ENCODE measurements at regions of chr12 and their contacts with region 1.

Region 1: DNA sequence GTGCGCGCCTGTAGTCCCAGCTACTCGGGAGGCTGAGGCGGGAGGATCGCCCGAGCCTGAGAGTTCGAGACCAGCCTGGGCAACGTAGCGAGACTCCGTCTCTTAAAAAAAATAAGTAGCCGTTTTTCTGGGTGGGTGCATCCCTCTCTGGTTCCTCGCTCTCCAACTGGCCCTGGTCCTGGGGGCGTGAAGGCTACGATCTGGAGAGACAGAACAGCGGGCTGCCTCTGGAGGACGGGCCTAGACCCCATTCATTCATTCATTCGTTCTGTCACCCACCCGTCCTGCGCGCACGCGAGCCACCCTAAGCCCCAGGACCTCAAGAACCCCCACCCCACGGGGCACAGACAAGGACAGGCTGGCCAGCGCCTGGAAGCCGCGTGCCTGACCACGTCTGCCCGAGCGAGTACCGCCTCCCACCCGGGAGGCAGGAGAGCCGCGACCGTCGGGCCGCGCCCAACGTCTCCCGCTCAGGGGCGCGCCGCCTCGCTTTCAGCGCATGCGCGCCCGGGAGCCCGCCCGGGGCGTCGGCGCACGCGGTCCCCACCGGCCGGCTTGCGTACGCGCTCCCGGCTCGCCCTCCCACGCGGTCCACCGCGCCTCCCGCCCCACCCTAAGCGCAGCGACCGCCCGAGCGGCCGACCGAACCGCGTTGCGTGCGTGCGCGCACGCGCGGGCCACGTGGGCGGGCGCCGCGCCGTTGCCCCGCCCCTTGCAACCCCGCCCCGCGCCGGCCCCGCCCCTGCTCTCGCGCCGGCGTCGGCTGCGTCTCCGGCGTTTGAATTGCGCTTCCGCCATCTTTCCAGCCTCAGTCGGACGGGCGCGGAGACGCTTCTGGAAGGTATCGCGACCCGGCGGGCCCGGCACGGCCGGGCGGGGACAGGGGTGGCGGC is at the start of gene RAN:
- DNase-seq: peak; percentile 97
- H3K4me3 ChIP-seq: peak within 1 kb of the TSS; percentile 100
- H3K27ac ChIP-seq: peak within 1 kb of the TSS; percentile 96
- H3K4me1 ChIP-seq: peaks cover 39% of the 10 kb centered on the region
- CTCF ChIP-seq: no peak
- total RNA-seq, gene RAN: 1,462 and 1,858 TPM in 2 replicates

Region 2: DNA sequence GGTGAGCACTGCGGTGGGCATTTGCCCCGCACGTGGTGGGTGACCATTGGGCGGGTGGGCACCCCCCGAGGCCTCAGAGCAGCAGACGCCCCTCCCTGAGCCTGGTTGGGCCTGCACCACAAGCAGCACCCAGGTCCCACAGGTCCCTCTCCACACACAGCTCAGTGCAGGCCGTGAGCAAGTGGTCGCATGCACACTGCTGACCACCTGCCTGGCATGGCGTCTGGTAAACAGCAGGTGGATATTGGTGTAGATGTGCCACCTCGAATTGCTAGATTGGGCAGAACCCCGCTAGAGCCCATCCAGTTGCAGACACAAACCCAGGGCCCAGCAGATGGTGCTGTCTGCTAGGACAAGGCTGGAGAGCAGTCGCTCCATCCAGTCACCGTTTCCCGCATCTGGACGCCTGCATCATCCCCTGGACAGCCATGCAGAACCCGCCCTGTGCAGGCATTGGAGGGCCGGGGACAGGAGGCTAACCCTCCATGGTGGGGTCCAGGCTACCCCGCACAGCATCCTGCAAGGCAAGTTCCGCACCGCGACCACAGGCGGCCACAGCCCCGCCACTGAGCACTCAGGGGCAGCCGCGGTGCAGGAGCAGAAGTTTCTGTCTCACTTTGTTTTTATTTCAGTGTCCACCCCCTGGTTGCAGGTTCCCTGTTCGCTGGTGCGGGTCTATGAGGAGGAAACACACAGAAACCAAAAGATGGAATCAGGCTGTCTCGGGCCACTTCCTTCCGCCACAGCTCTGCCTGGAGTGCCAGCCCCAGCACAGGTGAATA is 109.8 kb before region 1 on chr12:
- CTCF ChIA-PET with region 1: no interaction called
- POLR2A ChIA-PET with region 1: no interaction called
- intact Hi-C with region 1: no loop called
- DNase-seq: peak; percentile 36
- H3K4me3 ChIP-seq: peak overlapping the region; percentile 11
- H3K27ac ChIP-seq: no peak overlapping the region
- H3K4me1 ChIP-seq: no peaks in the 10 kb centered on the region
- CTCF ChIP-seq: peak; percentile 58

Region 3: DNA sequence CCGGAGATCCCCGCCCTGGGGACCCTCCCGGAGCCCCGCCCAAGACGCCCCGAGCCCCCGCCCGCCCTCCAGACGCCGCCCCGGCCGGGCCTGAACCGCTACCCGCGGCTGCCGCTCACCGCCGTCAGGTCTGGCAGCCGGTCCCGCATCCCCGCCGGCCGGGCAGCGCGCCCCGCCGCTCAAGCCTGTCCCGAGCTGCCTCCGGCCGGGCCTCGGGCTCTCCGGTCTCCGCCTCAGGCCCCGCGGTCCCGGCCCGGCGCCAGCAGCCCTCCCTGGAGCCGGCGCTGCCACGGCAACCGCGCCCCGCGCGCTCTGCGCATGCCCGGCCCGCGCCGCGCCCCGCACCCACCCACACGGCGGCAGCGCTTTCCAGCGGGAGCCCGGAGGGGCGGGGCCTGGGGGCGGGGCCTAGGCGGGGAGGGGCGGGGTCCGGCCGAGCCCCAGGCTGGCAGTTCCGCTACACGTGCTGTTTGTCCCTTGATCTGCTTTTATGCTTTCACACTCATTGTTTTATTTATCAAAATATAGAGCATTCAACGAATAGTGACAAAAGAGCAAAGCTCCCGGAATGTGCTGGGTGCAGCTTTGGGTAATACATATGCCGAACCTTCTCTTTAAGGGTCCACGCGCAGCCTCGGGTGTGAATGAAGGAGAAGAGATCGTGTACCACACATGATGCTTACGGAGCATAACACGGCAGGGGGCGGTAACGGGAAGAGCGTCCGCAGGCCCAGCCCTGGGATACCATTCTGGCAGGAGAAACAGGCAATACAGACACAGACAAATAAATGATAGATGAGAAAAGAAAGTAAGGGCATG is 32.4 kb before region 1 on chr12 and contains the start of gene STX2:
- CTCF ChIA-PET with region 1: no interaction called
- POLR2A ChIA-PET with region 1: interaction called, 5 read pairs
- intact Hi-C with region 1: loop called (anchors 1 kb)
- DNase-seq: peak; percentile 83
- H3K4me3 ChIP-seq: peak within 1 kb of the TSS; percentile 73
- H3K27ac ChIP-seq: peak within 1 kb of the TSS; percentile 3
- H3K4me1 ChIP-seq: peaks cover 18% of the 10 kb centered on the region
- CTCF ChIP-seq: peak; percentile 63
- total RNA-seq, gene STX2: 19.2 and 20.0 TPM in 2 replicates

Region 4: GRCh38 chr12:130980939-130981742 is 109.6 kb after region 1 on chr12:
- CTCF ChIA-PET with region 1: no interaction called
- POLR2A ChIA-PET with region 1: interaction called, 5 read pairs
- intact Hi-C with region 1: loop called (anchors 2 kb)
- DNase-seq: peak; percentile 85
- H3K4me3 ChIP-seq: peak overlapping the region; percentile 55
- H3K27ac ChIP-seq: peak overlapping the region; percentile 97
- H3K4me1 ChIP-seq: peaks cover 69% of the 10 kb centered on the region
- CTCF ChIP-seq: peak; percentile 28; the same call in 1 of the 2 replicates

Region 5: DNA sequence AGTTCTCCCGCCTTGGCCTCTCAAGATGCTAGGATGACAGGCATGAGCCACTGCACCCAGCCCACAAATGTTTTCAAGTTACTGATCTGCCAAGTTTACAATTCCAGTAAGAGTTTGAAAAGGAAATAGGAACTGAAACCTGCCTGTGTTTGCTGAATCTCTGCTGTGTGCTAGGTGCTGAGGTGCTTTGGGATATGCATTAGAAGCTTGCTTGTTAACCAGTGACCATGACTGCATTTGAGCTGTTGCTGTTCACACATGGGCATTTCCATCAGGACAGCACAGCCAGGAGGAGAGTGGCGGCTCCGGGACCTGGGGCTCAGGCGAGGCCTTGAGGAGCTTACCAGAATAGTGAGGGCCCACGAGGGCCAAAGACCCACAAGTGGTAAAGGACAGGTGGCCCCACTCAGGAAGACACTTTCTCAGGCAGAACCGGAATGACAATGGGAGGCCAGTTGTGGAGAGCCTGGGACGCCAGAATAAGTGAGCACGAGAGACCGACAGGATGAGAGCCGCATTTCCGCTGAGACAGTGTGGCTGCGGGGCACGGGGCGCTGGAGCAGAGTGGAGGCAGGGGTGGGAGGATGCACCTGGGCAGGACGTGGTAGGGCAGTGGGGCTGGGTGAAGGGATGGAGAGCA is 902.2 kb after region 1 on chr12:
- CTCF ChIA-PET with region 1: no interaction called
- POLR2A ChIA-PET with region 1: no interaction called
- intact Hi-C with region 1: loop called (anchors 10 kb)
- DNase-seq: peak; percentile 86
- H3K4me3 ChIP-seq: peak overlapping the region; percentile 57
- H3K27ac ChIP-seq: peak overlapping the region; percentile 94
- H3K4me1 ChIP-seq: peaks cover 59% of the 10 kb centered on the region
- CTCF ChIP-seq: no peak

Region 6: GRCh38 chr12:132071040-132071810 is 1199.7 kb after region 1 on chr12:
- CTCF ChIA-PET with region 1: no interaction called
- POLR2A ChIA-PET with region 1: no interaction called
- intact Hi-C with region 1: loop called (anchors 10 kb)
- DNase-seq: peak; percentile 84
- H3K4me3 ChIP-seq: peak overlapping the region; percentile 54
- H3K27ac ChIP-seq: peak overlapping the region; percentile 96
- H3K4me1 ChIP-seq: peaks cover 54% of the 10 kb centered on the region
- CTCF ChIP-seq: no peak